ENCODE measurements at regions of chr7 and their contacts with region 1.

Region 1: GRCh38 chr7:32639122-32639521 is 143.8 kb downstream of the AVL9 start:
- DNase-seq: no peak
- H3K4me3 ChIP-seq: no peak overlapping the region
- H3K27ac ChIP-seq: no peak overlapping the region
- H3K4me1 ChIP-seq: peaks cover 3% of the 10 kb centered on the region
- CTCF ChIP-seq: no peak

Region 2: GRCh38 chr7:32490127-32490822 is 148.8 kb before region 1 on chr7 and contains the start of gene LSM5:
- CTCF ChIA-PET with region 1: no interaction called
- POLR2A ChIA-PET with region 1: interaction called, 7 read pairs
- intact Hi-C with region 1: loop called (anchors 5 kb)
- DNase-seq: peak; percentile 96
- H3K4me3 ChIP-seq: peak within 1 kb of the TSS; percentile 84
- H3K27ac ChIP-seq: peak within 1 kb of the TSS; percentile 94
- H3K4me1 ChIP-seq: peaks cover 26% of the 10 kb centered on the region
- CTCF ChIP-seq: no peak
- total RNA-seq, gene LSM5: 33.8 and 38.9 TPM in 2 replicates

Region 3: DNA sequence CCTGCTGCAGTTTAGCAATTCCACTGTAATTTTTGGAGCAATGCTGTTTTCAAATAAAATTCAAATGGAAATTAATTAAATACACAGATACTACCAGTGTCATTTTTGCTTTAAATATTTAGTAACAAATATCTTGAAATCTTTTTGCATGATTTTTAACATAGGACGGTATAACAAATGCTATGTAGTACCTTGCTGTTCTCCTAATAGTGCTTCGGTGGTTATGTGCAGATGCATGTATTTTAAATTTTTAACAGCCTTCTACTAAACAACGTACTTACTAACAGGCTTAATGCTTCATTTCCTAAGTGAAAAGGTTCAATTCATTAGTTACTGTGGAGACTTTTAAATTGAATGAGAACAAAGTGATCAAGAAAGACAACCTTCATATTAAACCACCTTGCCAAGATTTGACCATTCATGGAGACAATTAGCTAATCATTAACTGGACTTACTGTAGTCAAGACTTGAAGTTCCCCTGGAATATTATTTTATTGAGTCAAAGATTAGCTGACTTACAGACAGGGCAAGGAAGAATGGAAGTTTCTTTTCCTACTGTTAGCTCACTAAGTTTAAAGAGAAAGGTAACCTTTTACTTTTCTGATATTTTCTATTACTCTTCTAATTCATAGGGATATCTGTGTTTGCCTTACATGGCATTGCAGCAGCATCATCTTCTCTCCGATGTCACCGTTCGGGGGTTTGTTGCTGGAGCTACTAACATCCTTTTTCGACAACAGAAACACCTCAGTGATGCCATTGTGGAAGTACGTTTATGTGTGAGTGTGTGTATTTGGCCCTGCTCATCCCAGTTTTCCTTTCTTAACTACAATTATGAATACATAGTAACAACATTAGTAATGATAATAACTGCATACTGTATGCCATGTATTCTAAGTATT is 69.5 kb before region 1 on chr7:
- CTCF ChIA-PET with region 1: no interaction called
- POLR2A ChIA-PET with region 1: no interaction called
- intact Hi-C with region 1: loop called (anchors 10 kb)
- DNase-seq: no peak
- H3K4me3 ChIP-seq: no peak overlapping the region
- H3K27ac ChIP-seq: no peak overlapping the region
- H3K4me1 ChIP-seq: no peaks in the 10 kb centered on the region
- CTCF ChIP-seq: no peak

Measured in OCI-LY7 (cell line).